Caco-2 (cell line): ENCODE measurements at regions of chr7 and their contacts with region 1.

Region 1: GRCh38 chr7:27745064-27745583 is 5.2 kb downstream of the TAX1BP1 start:
- DNase-seq: peak; percentile 52 to 61
- H3K4me3 ChIP-seq: no peak overlapping the region
- H3K4me3 Mint-ChIP-seq: peak overlapping the region; percentile 20
- H3K27ac Mint-ChIP-seq: peak overlapping the region; percentile 36
- H3K4me1 ChIP-seq: peaks cover 16% of the 10 kb centered on the region
- H3K4me1 Mint-ChIP-seq: peaks cover 7% of the 10 kb centered on the region
- H3K27me3 ChIP-seq: no peaks in the 10 kb centered on the region
- H3K27me3 Mint-ChIP-seq: no peaks in the 10 kb centered on the region
- CTCF ChIP-seq: peak; percentile 61 to 81

Region 2: DNA sequence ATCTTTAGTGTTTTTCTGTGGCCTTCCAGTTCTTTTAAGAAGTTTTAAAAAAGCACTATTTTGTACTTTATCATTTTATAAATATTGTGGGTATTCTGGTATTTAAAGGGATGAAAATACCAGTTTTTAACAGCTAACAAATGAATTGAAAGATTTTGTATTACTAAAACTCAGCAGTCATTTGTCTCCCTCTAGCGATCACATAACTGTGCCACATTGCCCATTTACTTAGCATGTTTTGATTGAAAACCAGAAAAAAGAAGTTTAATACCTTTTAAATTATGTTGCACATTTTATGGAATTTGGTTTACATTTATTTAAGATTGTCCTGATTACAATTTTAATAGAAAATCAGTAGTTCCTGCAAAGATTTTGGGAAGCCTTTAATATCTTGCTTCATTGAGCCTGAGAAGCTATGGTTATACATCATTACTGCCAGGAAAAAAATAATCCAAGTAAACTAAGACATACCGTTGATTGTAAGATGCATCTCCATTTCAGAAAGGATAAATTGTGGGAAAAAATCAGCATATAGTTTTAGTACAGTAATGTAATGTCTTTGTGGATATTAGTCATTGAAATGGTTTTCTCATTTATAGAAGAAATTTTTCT is 29.7 kb after region 1 on chr7:
- CTCF ChIA-PET with region 1: interaction called, 30 read pairs
- POLR2A ChIA-PET with region 1: no interaction called
- intact Hi-C with region 1: loop called (anchors 1 kb)
- DNase-seq: no peak
- H3K4me3 ChIP-seq: no peak overlapping the region
- H3K4me3 Mint-ChIP-seq: no peak overlapping the region
- H3K27ac Mint-ChIP-seq: no peak overlapping the region
- H3K4me1 ChIP-seq: no peaks in the 10 kb centered on the region
- H3K4me1 Mint-ChIP-seq: no peaks in the 10 kb centered on the region
- H3K27me3 ChIP-seq: no peaks in the 10 kb centered on the region; the same call in 1 of the 2 replicates
- H3K27me3 Mint-ChIP-seq: no peaks in the 10 kb centered on the region
- CTCF ChIP-seq: peak; percentile 71 to 75

Region 3: GRCh38 chr7:27784393-27785053 is 39.4 kb after region 1 on chr7:
- CTCF ChIA-PET with region 1: interaction called, 3 read pairs
- POLR2A ChIA-PET with region 1: no interaction called
- intact Hi-C with region 1: loop called (anchors 2 kb)
- DNase-seq: peak in 1 of 2 experiments; percentile 62
- H3K4me3 ChIP-seq: no peak overlapping the region
- H3K4me3 Mint-ChIP-seq: no peak overlapping the region
- H3K27ac Mint-ChIP-seq: no peak overlapping the region
- H3K4me1 ChIP-seq: peaks cover 7% of the 10 kb centered on the region; the same call in 1 of the 2 replicates
- H3K4me1 Mint-ChIP-seq: peaks cover 6% of the 10 kb centered on the region
- H3K27me3 ChIP-seq: no peaks in the 10 kb centered on the region
- H3K27me3 Mint-ChIP-seq: no peaks in the 10 kb centered on the region
- CTCF ChIP-seq: peak; percentile 55 to 74